A549 (cell line): ENCODE measurements at regions of chr12 and their contacts with region 1.

Region 1: GRCh38 chr12:116599285-116600136 is 40.3 kb downstream of the MAP1LC3B2 start:
- DNase-seq: peak; percentile 79 to 83
- ATAC-seq: peak; percentile 63 to 87; a peak in 5 of 6 replicates
- H3K4me3 ChIP-seq: no peak overlapping the region
- H3K27ac ChIP-seq: peak overlapping the region; percentile 37 to 76
- H3K4me1 ChIP-seq: peaks cover 38% of the 10 kb centered on the region
- CTCF ChIP-seq: peak; percentile 69
- EP300 ChIP-seq: no peak
- POLR2A ChIP-seq: no peak
- RAD21 ChIP-seq: peak; percentile 73 to 93

Region 2: GRCh38 chr12:116142936-116143898 is 456.3 kb before region 1 on chr12:
- CTCF ChIA-PET with region 1: interaction called, 10 read pairs
- POLR2A ChIA-PET with region 1: no interaction called
- DNase-seq: peak in 1 of 2 experiments; percentile 33
- ATAC-seq: peak in 1 of 2 experiments; percentile 50; a peak in 3 of 6 replicates
- H3K4me3 ChIP-seq: no peak overlapping the region
- H3K27ac ChIP-seq: peak overlapping the region; percentile 7 to 61; a peak in 4 of 6 replicates
- H3K4me1 ChIP-seq: peaks cover 68% of the 10 kb centered on the region
- CTCF ChIP-seq: no peak
- EP300 ChIP-seq: no peak
- POLR2A ChIP-seq: no peak
- RAD21 ChIP-seq: no peak

Region 3: GRCh38 chr12:116434155-116435011 is 165.1 kb before region 1 on chr12:
- CTCF ChIA-PET with region 1: interaction called, 14 read pairs
- POLR2A ChIA-PET with region 1: no interaction called
- DNase-seq: peak; percentile 81 to 93
- ATAC-seq: peak; percentile 91 to 96
- H3K4me3 ChIP-seq: peak overlapping the region; percentile 37
- H3K27ac ChIP-seq: peak overlapping the region; percentile 79 to 88
- H3K4me1 ChIP-seq: peaks cover 32% of the 10 kb centered on the region
- CTCF ChIP-seq: no peak
- EP300 ChIP-seq: no peak
- POLR2A ChIP-seq: peak; percentile 26
- RAD21 ChIP-seq: peak; percentile 39 to 51; a peak in 3 of 5 replicates

Region 4: GRCh38 chr12:116587270-116587669 is 12.2 kb before region 1 on chr12:
- CTCF ChIA-PET with region 1: interaction called, 19 read pairs
- POLR2A ChIA-PET with region 1: no interaction called
- DNase-seq: no peak
- ATAC-seq: no peak
- H3K4me3 ChIP-seq: no peak overlapping the region
- H3K27ac ChIP-seq: no peak overlapping the region
- H3K4me1 ChIP-seq: peaks cover 21% of the 10 kb centered on the region
- CTCF ChIP-seq: no peak
- EP300 ChIP-seq: no peak
- POLR2A ChIP-seq: no peak
- RAD21 ChIP-seq: no peak